Caco-2 (cell line): ENCODE measurements at regions of chr3 and their contacts with region 1.

Region 1: GRCh38 chr3:120095226-120095978 is 1.2 kb upstream of the GSK3B start:
- DNase-seq: peak; percentile 91 to 92
- H3K4me3 ChIP-seq: peak overlapping the region; percentile 91
- H3K4me3 Mint-ChIP-seq: no peak overlapping the region
- H3K27ac Mint-ChIP-seq: no peak overlapping the region
- H3K4me1 ChIP-seq: peaks cover 25% of the 10 kb centered on the region
- H3K4me1 Mint-ChIP-seq: peaks cover 17% of the 10 kb centered on the region
- H3K27me3 ChIP-seq: no peaks in the 10 kb centered on the region
- H3K27me3 Mint-ChIP-seq: no peaks in the 10 kb centered on the region
- CTCF ChIP-seq: no peak

Region 2: GRCh38 chr3:119891944-119892721 is 203.3 kb before region 1 on chr3:
- CTCF ChIA-PET with region 1: no interaction called
- POLR2A ChIA-PET with region 1: no interaction called
- intact Hi-C with region 1: loop called (anchors 5 kb)
- DNase-seq: peak in 1 of 2 experiments; percentile 50
- H3K4me3 ChIP-seq: no peak overlapping the region
- H3K4me3 Mint-ChIP-seq: no peak overlapping the region
- H3K27ac Mint-ChIP-seq: no peak overlapping the region
- H3K4me1 ChIP-seq: no peaks in the 10 kb centered on the region
- H3K4me1 Mint-ChIP-seq: no peaks in the 10 kb centered on the region
- H3K27me3 ChIP-seq: no peaks in the 10 kb centered on the region
- H3K27me3 Mint-ChIP-seq: no peaks in the 10 kb centered on the region
- CTCF ChIP-seq: peak; percentile 50 to 59

Region 3: DNA sequence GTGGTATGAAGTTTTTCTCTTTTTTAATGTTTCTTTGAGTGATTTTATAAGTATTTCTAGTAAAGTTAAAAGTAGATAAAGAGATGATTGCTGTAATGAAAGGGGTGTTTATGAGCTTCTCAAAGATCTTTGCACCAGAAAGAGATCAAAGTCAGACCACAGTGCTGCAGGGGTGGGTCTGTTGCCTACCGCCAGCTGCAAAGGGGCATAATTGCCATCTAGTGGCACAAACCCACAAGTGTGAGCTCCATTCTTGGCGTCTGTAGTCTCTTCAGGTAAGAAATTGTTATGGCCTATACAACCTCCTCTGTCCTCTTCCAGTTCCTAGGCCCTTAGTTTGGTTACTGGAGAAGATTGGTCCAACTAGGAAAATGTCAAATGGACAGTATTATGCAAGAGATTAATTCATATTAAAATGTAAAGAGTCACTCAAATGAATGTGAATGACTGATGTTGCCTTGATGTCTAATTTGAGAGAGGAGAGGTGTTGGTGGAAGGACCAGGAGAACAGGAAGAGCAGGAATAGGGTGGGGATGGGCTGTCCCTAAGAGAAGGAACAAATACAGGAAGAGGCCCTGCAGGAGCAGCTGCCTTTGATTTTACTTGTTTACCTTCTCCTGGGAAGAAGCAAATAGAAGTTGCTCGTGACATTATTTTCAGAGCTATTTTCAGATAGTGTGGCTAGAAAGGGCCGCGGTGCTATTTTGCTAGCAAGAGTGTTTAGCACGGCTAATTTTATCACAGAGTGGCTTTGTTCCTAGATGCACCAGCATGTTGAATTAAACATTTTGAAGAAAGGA is 51.9 kb after region 1 on chr3:
- CTCF ChIA-PET with region 1: interaction called, 5 read pairs
- POLR2A ChIA-PET with region 1: interaction called, 58 read pairs
- intact Hi-C with region 1: loop called (anchors 1 kb)
- DNase-seq: peak; percentile 76 to 80
- H3K4me3 ChIP-seq: no peak overlapping the region
- H3K4me3 Mint-ChIP-seq: peak overlapping the region; percentile 18
- H3K27ac Mint-ChIP-seq: peak overlapping the region; percentile 96
- H3K4me1 ChIP-seq: peaks cover 55% of the 10 kb centered on the region
- H3K4me1 Mint-ChIP-seq: peaks cover 51% of the 10 kb centered on the region
- H3K27me3 ChIP-seq: no peaks in the 10 kb centered on the region
- H3K27me3 Mint-ChIP-seq: no peaks in the 10 kb centered on the region
- CTCF ChIP-seq: no peak

Region 4: GRCh38 chr3:120182724-120183524 is 87.5 kb after region 1 on chr3:
- CTCF ChIA-PET with region 1: no interaction called
- POLR2A ChIA-PET with region 1: interaction called, 3 read pairs
- intact Hi-C with region 1: loop called (anchors 2 kb)
- DNase-seq: no peak
- H3K4me3 ChIP-seq: no peak overlapping the region
- H3K4me3 Mint-ChIP-seq: no peak overlapping the region
- H3K27ac Mint-ChIP-seq: no peak overlapping the region
- H3K4me1 ChIP-seq: peaks cover 20% of the 10 kb centered on the region
- H3K4me1 Mint-ChIP-seq: peaks cover 30% of the 10 kb centered on the region
- H3K27me3 ChIP-seq: no peaks in the 10 kb centered on the region
- H3K27me3 Mint-ChIP-seq: no peaks in the 10 kb centered on the region
- CTCF ChIP-seq: peak in 1 of 2 experiments; percentile 53